GM12878 (cell line): ENCODE measurements at regions of chr2 and their contacts with region 1.

Region 1: DNA sequence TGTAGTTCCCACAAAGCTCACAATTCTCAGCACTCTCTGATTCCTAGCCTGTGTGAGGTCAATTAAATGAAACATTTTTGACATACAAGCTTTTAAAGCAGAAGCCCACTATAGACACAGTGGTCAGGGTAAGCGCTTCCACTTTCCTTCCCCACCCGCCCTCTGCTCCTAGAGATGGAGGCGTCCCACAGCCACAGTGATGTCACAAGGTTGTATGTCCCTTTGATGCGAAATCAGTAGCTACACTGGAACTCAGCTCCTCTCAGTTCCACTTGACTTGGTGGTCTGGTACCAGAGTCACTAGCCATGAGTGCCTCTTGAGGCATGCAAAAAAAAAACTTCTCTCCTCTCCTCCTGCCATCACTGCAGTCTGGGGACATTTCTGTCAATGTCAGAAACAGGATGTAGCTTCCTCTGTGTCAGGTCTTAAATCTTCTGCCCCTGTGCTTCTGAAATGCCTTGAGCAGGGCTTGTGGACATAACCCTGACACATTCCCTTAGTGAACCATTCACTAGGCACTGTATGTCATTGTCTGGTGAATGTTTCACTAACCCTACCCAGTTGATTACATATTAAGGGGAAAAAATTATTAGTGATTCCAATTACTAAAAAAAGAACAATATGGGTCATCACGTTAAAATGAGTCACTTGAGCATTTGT is 7.8 kb downstream of the SULT1C4 start:
- DNase-seq: peak; percentile 48
- ATAC-seq: peak; percentile 85
- H3K4me3 ChIP-seq: no peak overlapping the region
- H3K27ac ChIP-seq: no peak overlapping the region
- H3K4me1 ChIP-seq: no peaks in the 10 kb centered on the region; the same call in 1 of the 2 replicates
- H3K27me3 ChIP-seq: no peaks in the 10 kb centered on the region
- CTCF ChIP-seq: no peak
- EP300 ChIP-seq: peak in 1 of 2 experiments; percentile 24; a peak in 1 of 4 replicates
- POLR2A ChIP-seq: no peak
- RAD21 ChIP-seq: no peak

Region 2: DNA sequence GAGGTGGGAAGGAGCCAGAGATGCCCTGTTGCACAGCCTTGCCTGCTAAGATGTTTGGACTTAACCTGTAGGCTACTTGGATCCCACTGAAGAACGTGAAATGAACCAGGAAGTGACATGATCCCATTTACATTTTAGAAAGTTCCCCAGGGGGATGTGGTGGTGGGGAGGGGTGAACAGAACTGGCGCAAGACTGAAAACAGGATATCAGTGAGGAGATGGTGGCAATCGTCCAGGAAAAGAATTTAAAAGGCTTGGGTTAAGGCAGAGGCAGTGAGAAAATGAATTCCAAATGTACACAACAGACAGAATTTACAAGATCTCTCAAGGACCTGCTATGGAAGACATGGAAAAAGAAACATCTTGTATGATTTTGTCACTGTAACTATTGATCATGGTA is 54.6 kb before region 1 on chr2:
- CTCF ChIA-PET with region 1: no interaction called
- POLR2A ChIA-PET with region 1: no interaction called
- RAD21 ChIA-PET with region 1: no interaction called
- SMC1A ChIA-PET with region 1: no interaction called
- in situ Hi-C with region 1: no loop called
- intact Hi-C with region 1: no loop called
- DNase-seq: no peak
- ATAC-seq: no peak
- H3K4me3 ChIP-seq: no peak overlapping the region
- H3K27ac ChIP-seq: no peak overlapping the region
- H3K4me1 ChIP-seq: no peaks in the 10 kb centered on the region
- H3K27me3 ChIP-seq: 0 out of 4 replicates have a peak, but pooled peaks cover 0 to 3% of the 10 kb centered on the region in 2 experiments
- CTCF ChIP-seq: no peak
- EP300 ChIP-seq: no peak
- POLR2A ChIP-seq: no peak
- RAD21 ChIP-seq: no peak

Region 3: DNA sequence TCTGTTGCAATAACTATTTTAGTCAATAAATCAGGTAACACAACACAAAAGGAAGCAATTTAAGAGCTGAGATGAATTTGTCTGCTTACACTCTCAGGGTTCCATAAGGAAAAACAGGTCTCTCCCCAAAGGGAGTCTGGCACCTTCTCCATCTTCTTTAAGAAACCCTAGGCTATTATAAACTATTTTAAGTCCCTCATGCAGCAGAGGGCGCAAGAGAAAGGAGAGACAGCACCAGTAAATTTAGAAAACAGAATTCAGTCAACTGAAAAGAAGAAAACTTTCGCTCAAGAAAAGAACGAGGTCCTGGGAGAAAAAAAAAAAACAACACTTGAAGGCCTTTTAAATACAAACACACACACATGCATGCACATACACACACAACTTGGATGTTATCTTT is 11.3 kb after region 1 on chr2:
- CTCF ChIA-PET with region 1: interaction called, 11 read pairs
- POLR2A ChIA-PET with region 1: interaction called, 3 read pairs
- RAD21 ChIA-PET with region 1: interaction called, 3 read pairs
- SMC1A ChIA-PET with region 1: interaction called, 4 read pairs
- in situ Hi-C with region 1: no loop called
- intact Hi-C with region 1: no loop called
- DNase-seq: no peak
- ATAC-seq: peak; percentile 61
- H3K4me3 ChIP-seq: no peak overlapping the region
- H3K27ac ChIP-seq: no peak overlapping the region
- H3K4me1 ChIP-seq: no peaks in the 10 kb centered on the region
- H3K27me3 ChIP-seq: no peaks in the 10 kb centered on the region
- CTCF ChIP-seq: peak; percentile 40 to 51 (median 50); a peak in 5 of 6 replicates
- EP300 ChIP-seq: no peak
- POLR2A ChIP-seq: no peak
- RAD21 ChIP-seq: peak; percentile 83